ENCODE measurements at regions of chr22 and their contacts with region 1.

Region 1: DNA sequence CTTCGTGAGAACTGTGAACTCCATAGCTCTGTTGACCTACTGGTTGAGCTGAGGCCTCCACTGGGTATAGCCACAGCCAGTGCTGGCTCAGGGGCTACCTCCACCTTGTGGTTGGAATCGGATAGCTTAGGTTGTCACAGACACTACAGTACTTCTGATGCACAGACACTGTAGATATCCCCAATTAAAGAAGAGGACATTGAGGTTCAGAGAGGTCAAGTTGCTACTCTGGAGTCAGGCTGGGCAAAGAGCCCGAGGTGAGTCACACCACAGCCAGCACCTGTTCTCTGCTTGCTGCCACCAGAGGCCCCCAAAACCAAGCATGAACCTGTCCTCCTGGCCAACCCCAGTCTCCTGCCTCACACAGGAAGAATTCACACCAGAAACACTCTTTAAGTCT is 5.4 kb downstream of the UFD1 start:
- DNase-seq: no peak
- ATAC-seq: no peak
- H3K4me3 Mint-ChIP-seq: no peak overlapping the region
- H3K27ac Mint-ChIP-seq: no peak overlapping the region
- H3K4me1 Mint-ChIP-seq: peaks cover 19% of the 10 kb centered on the region
- H3K27me3 Mint-ChIP-seq: no peaks in the 10 kb centered on the region

Region 2: DNA sequence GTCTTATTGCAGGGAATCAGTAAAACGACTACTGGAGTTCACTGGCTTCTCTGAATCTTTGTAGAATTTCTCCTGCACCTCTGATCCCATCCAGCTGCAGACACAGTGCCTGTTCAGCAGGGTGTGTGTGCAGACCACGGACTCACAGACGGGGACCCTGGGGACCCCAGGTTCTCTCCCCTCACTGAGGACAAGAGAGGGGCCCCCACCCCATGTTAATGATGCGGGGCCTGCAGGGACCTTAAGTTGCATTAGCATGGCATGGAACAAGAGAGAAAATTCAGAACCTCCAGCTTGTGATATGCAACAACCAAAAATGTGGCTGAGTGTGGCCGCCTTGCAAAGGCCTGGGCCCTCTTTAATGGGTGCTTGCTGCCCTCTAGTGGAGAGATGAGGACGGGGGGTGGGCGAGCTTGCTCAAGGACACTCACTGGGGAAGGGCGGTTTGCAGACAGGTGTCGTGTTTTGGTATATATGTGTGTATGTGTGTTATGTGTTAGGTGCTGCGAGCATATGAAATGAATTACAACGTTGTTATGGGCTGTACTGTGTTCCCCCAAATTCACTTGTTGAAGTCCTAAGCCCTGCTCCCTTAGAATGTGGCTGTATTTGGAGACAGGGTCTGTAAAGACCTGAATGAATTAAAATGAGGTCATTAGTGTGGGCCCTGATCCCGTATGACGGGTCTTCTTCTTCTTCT is 156.3 kb after region 1 on chr22:
- CTCF ChIA-PET with region 1: interaction called, 11 read pairs
- DNase-seq: peak; percentile 88
- ATAC-seq: peak; percentile 97
- H3K4me3 Mint-ChIP-seq: no peak overlapping the region
- H3K27ac Mint-ChIP-seq: no peak overlapping the region
- H3K4me1 Mint-ChIP-seq: no peaks in the 10 kb centered on the region
- H3K27me3 Mint-ChIP-seq: peaks cover 5% of the 10 kb centered on the region

Measured in activated CD8-positive, alpha-beta memory T cell treated with anti-CD3 and anti-CD28 coated beads, Interleukin-2, amount 10 ng/mL, durations not matched to agents 7 days and 5 days (primary cell).